ENCODE measurements at regions of chr22 and their contacts with region 1.

Region 1: GRCh38 chr22:46557736-46558480 is 20.5 kb upstream of the CELSR1 start:
- DNase-seq: no peak
- H3K4me3 ChIP-seq: no peak overlapping the region
- H3K27ac ChIP-seq: no peak overlapping the region
- H3K4me1 ChIP-seq: peaks cover 0 to 18% (median 16%) of the 10 kb centered on the region in 4 experiments
- H3K27me3 ChIP-seq: peaks cover 0 to 1% (median 0%) of the 10 kb centered on the region in 5 experiments

Region 2: GRCh38 chr22:46517255-46517761 is 40.6 kb before region 1 on chr22:
- CTCF ChIA-PET with region 1: no interaction called
- POLR2A ChIA-PET with region 1: no interaction called
- DNase-seq: no peak
- H3K4me3 ChIP-seq: no peak overlapping the region
- H3K27ac ChIP-seq: no peak overlapping the region
- H3K4me1 ChIP-seq: no peaks in the 10 kb centered on the region
- H3K27me3 ChIP-seq: peaks cover 0 to 3% (median 1%) of the 10 kb centered on the region in 5 experiments

Region 3: DNA sequence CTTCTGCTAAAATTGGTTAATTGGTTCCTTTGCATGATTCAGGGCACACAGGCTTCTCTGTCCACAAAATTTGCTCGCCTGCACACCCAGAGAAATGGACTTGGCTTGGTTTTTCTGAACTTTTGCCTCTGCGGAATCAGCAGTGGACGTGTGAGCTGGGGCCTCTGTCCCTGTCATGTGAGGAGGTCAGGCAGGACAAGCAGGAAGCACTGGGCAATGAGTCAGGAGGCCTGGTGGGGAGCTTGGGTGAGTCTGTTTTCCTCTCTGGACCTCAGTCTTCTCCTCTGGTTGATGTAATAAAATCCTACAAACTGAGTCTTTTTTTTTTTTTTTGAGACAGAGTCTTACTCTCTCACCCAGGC is 10.0 kb before region 1 on chr22:
- CTCF ChIA-PET with region 1: interaction called, 22 read pairs
- POLR2A ChIA-PET with region 1: no interaction called
- DNase-seq: no peak
- H3K4me3 ChIP-seq: no peak overlapping the region
- H3K27ac ChIP-seq: no peak overlapping the region
- H3K4me1 ChIP-seq: peaks cover 0 to 10% (median 6%) of the 10 kb centered on the region in 4 experiments
- H3K27me3 ChIP-seq: peaks cover 0 to 11% (median 0%) of the 10 kb centered on the region in 5 experiments